AG04450 (cell line): ENCODE measurements at regions of chr9 and their contacts with region 1.

Region 1: DNA sequence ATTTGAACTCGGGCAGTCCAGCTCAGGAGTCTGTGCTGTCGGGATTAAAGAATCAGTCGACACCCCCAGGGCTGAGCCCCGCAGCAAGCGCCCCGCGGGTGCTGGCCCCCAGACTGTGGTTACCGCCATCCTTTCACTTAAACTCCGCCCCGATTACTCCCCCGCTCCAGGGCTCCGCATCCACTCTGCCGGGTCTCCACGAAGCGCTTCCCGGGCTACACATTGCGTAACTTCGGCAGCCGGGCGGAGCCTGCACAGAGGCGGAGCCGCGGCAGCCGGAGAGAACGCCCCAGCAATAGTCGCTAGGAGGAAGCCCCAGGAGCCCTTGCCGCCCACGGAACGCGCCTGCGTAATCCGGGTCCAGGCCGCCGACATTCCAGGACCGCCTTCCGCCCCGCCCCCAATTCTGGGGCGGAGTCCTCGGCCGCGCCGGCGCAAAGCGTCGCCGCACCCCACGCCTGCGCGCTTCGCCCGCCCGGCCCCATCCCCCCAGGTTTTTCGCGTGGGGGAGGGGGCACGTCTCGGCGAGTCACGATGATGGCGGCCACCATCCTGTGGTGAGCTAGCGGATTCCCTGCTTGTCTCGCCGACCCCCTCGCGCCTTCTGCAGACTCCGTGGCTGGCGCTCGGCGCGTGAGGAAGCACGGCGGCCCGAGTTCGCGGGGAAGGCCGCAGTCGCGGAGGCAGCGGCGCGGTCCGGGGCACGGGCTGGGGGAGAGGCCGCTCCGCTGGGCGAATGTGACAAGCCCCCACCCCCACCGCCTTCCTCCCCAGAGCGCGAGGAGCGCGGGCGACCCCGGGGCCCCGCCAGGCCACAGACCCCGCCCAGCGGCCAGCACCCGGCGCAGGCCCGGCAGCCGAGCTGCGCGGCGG is at the start of gene RAD23B:
- DNase-seq: peak; percentile 97
- H3K4me3 ChIP-seq: peak within 1 kb of the TSS; percentile 94
- H3K27ac ChIP-seq: peak within 1 kb of the TSS; percentile 86
- H3K27me3 ChIP-seq: no peaks in the 10 kb centered on the region
- CTCF ChIP-seq: no peak
- polyA plus RNA-seq, gene RAD23B: 214 and 224 TPM in 2 replicates

Region 2: DNA sequence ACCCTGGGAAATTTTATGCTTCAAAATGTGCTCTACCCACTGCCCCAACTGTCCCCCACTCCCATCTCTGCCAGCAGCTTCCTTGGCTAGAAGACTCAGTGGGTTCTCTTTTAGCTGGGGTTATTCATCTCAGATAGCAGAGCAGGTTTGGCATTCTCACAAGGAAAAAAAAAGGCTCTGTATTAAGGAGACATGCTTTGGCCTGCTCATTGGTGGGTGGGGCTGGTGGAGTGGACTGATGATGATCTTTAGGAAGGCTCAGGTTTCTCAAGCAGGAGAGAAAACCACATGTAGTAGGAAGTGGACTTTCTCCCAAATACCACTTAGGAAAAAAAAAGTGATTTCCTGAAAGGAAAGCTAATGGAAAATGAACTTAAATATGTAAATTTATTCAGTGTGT is 699.2 kb before region 1 on chr9:
- CTCF ChIA-PET with region 1: no interaction called
- POLR2A ChIA-PET with region 1: no interaction called
- DNase-seq: no peak
- H3K4me3 ChIP-seq: no peak overlapping the region
- H3K27ac ChIP-seq: no peak overlapping the region
- H3K27me3 ChIP-seq: no peaks in the 10 kb centered on the region
- CTCF ChIP-seq: no peak

Region 3: GRCh38 chr9:107251756-107252322 is 31.1 kb before region 1 on chr9:
- CTCF ChIA-PET with region 1: no interaction called
- POLR2A ChIA-PET with region 1: interaction called, 25 read pairs
- DNase-seq: peak; percentile 83
- H3K4me3 ChIP-seq: no peak overlapping the region
- H3K27ac ChIP-seq: peak overlapping the region; percentile 92
- H3K27me3 ChIP-seq: no peaks in the 10 kb centered on the region
- CTCF ChIP-seq: no peak

Region 4: GRCh38 chr9:107309271-107309670 is 26.3 kb after region 1 on chr9:
- CTCF ChIA-PET with region 1: no interaction called
- POLR2A ChIA-PET with region 1: interaction called, 12 read pairs
- DNase-seq: no peak
- H3K4me3 ChIP-seq: no peak overlapping the region
- H3K27ac ChIP-seq: no peak overlapping the region
- H3K27me3 ChIP-seq: no peaks in the 10 kb centered on the region
- CTCF ChIP-seq: no peak

Region 5: DNA sequence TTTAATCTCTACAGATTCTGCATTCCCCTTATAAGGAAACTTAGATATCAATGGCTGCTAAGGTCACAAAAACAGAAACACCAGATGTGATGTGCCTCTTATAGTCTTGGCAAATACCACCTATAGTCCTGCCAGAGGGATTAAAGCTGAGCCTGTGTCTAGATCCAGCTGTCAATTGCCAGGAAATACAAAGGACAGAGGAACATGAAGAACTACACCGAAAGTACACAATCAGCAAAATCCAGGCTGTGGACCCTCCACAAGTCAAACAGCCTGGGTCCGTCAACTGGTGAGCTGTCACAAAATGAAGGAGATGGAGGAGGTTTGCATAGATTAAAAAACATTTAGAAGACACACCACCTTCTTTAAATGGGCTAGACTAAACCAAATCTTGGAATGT is 121.2 kb after region 1 on chr9:
- CTCF ChIA-PET with region 1: no interaction called
- POLR2A ChIA-PET with region 1: no interaction called
- DNase-seq: no peak
- H3K4me3 ChIP-seq: no peak overlapping the region
- H3K27ac ChIP-seq: no peak overlapping the region
- H3K27me3 ChIP-seq: no peaks in the 10 kb centered on the region
- CTCF ChIP-seq: no peak